Activated B cell treated with CpG ODN at 0.5 μM for 24 hours (primary cell): ENCODE measurements at regions of chr10 and their contacts with region 1.

Region 1: DNA sequence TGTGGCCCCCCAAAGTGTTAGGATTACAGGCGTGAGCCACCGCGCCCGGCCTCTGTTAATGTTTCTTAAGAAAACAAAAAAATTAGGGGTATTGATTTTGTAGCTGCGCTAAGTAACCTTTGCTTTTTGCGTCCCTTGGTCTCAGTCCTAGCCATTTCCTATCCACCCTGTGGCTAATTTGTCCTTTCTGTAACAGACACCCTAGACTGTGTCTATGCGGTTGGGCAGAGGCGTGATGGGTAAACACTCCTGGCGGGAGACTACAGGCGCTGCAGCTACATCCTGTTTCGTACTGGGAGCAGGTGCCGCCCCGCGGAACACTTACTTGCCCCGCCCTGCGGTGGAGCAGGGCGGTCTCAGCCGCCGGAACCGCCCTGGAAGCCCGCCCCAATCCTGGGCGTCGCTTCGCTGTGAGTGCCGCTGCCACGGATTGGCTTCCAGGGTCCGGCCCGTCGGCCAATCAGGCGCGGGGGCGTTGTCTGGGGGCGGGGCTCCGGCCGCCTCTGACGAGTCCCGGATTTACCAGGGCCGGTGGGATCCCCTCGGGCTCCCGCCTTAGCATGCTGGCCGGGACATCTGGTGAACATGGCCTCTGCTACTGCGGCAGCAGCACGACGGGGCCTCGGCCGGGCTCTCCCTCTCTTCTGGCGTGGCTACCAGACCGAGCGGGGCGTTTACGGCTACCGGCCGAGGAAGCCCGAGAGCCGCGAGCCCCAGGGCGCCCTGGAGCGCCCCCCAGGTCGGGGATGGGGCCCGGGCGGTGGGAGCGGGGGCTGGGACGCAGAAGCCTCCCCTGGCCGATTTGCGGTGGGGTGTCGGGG is at the start of gene DHTKD1:
- DNase-seq: peak; percentile 99
- ATAC-seq: peak; percentile 96
- H3K4me3 Mint-ChIP-seq: peak within 1 kb of the TSS; percentile 87
- H3K27ac Mint-ChIP-seq: peak within 1 kb of the TSS; percentile 90
- H3K4me1 Mint-ChIP-seq: peaks cover 44% of the 10 kb centered on the region
- H3K27me3 Mint-ChIP-seq: no peaks in the 10 kb centered on the region
- CTCF ChIP-seq: no peak
- total RNA-seq, gene DHTKD1: 58.2 and 60.7 TPM in 2 replicates

Region 2: GRCh38 chr10:12048547-12048946 is 20.1 kb before region 1 on chr10:
- CTCF ChIA-PET with region 1: no interaction called
- POLR2A ChIA-PET with region 1: interaction called, 277 read pairs
- intact Hi-C with region 1: loop called (anchors 1 kb)
- DNase-seq: no peak
- ATAC-seq: no peak
- H3K4me3 Mint-ChIP-seq: no peak overlapping the region
- H3K27ac Mint-ChIP-seq: peak overlapping the region; percentile 67
- H3K4me1 Mint-ChIP-seq: peaks cover 52% of the 10 kb centered on the region
- H3K27me3 Mint-ChIP-seq: no peaks in the 10 kb centered on the region
- CTCF ChIP-seq: no peak

Region 3: GRCh38 chr10:12091421-12091820 is 22.8 kb after region 1 on chr10:
- CTCF ChIA-PET with region 1: no interaction called
- POLR2A ChIA-PET with region 1: interaction called, 11 read pairs
- intact Hi-C with region 1: no loop called
- DNase-seq: no peak
- ATAC-seq: no peak
- H3K4me3 Mint-ChIP-seq: no peak overlapping the region
- H3K27ac Mint-ChIP-seq: peak overlapping the region; percentile 65
- H3K4me1 Mint-ChIP-seq: peaks cover 2% of the 10 kb centered on the region
- H3K27me3 Mint-ChIP-seq: no peaks in the 10 kb centered on the region
- CTCF ChIP-seq: no peak

Region 4: GRCh38 chr10:12579954-12580858 is 511.5 kb after region 1 on chr10:
- CTCF ChIA-PET with region 1: no interaction called
- POLR2A ChIA-PET with region 1: no interaction called
- intact Hi-C with region 1: no loop called
- DNase-seq: no peak
- ATAC-seq: peak; percentile 21
- H3K4me3 Mint-ChIP-seq: no peak overlapping the region
- H3K27ac Mint-ChIP-seq: peak overlapping the region; percentile 5
- H3K4me1 Mint-ChIP-seq: peaks cover 29% of the 10 kb centered on the region
- H3K27me3 Mint-ChIP-seq: no peaks in the 10 kb centered on the region
- CTCF ChIP-seq: no peak

Region 5: GRCh38 chr10:12897278-12897677 is 828.6 kb after region 1 on chr10:
- CTCF ChIA-PET with region 1: no interaction called
- POLR2A ChIA-PET with region 1: no interaction called
- intact Hi-C with region 1: no loop called
- DNase-seq: no peak
- ATAC-seq: no peak
- H3K4me3 Mint-ChIP-seq: no peak overlapping the region
- H3K27ac Mint-ChIP-seq: no peak overlapping the region
- H3K4me1 Mint-ChIP-seq: no peaks in the 10 kb centered on the region
- H3K27me3 Mint-ChIP-seq: peaks cover 11% of the 10 kb centered on the region
- CTCF ChIP-seq: no peak